GM12878 (cell line): ENCODE measurements at regions of chr15 and their contacts with region 1.

Region 1: GRCh38 chr15:92097474-92098178 is 244.1 kb downstream of the SLCO3A1 start:
- DNase-seq: peak; percentile 20
- ATAC-seq: peak; percentile 89
- H3K4me3 ChIP-seq: no peak overlapping the region
- H3K27ac ChIP-seq: no peak overlapping the region
- H3K4me1 ChIP-seq: peaks cover 27% of the 10 kb centered on the region
- H3K27me3 ChIP-seq: no peaks in the 10 kb centered on the region
- CTCF ChIP-seq: peak; percentile 82 to 90 (median 85)
- EP300 ChIP-seq: no peak
- POLR2A ChIP-seq: no peak
- RAD21 ChIP-seq: peak; percentile 86

Region 2: DNA sequence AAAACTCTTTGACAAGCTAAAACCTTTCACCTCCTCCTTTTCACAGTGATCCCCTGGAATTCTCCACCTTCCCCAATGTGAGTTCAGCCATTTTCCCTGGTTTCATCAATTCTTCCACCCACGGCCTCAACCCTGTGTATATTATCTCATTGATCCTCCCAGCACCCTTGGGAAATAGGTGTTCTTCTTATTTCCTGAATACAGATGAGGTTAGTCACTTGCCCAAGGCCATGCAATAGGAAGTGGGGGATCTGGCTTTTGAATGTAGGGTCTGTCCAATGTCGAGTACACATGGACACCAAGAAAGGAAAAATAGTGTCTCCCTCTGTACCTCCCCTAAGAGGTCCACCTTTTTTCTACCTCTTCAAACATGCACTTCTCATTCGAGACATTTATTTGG is 33.3 kb after region 1 on chr15:
- CTCF ChIA-PET with region 1: no interaction called
- POLR2A ChIA-PET with region 1: no interaction called
- RAD21 ChIA-PET with region 1: no interaction called
- SMC1A ChIA-PET with region 1: no interaction called
- in situ Hi-C with region 1: no loop called
- intact Hi-C with region 1: no loop called
- DNase-seq: no peak
- ATAC-seq: no peak
- H3K4me3 ChIP-seq: no peak overlapping the region
- H3K27ac ChIP-seq: no peak overlapping the region
- H3K4me1 ChIP-seq: no peaks in the 10 kb centered on the region
- H3K27me3 ChIP-seq: no peaks in the 10 kb centered on the region; a peak in 1 of 4 replicates
- CTCF ChIP-seq: no peak
- EP300 ChIP-seq: no peak
- POLR2A ChIP-seq: no peak
- RAD21 ChIP-seq: no peak

Region 3: GRCh38 chr15:92161039-92161670 is 63.5 kb after region 1 on chr15:
- CTCF ChIA-PET with region 1: no interaction called
- POLR2A ChIA-PET with region 1: no interaction called
- RAD21 ChIA-PET with region 1: no interaction called
- SMC1A ChIA-PET with region 1: interaction called, 6 read pairs
- in situ Hi-C with region 1: no loop called
- intact Hi-C with region 1: loop called (anchors 1 kb)
- DNase-seq: peak; percentile 80
- ATAC-seq: peak; percentile 91
- H3K4me3 ChIP-seq: no peak overlapping the region
- H3K27ac ChIP-seq: peak overlapping the region; percentile 54
- H3K4me1 ChIP-seq: peaks cover 19% of the 10 kb centered on the region
- H3K27me3 ChIP-seq: no peaks in the 10 kb centered on the region
- CTCF ChIP-seq: no peak
- EP300 ChIP-seq: no peak; a peak in 1 of 4 replicates
- POLR2A ChIP-seq: no peak
- RAD21 ChIP-seq: no peak

Region 4: DNA sequence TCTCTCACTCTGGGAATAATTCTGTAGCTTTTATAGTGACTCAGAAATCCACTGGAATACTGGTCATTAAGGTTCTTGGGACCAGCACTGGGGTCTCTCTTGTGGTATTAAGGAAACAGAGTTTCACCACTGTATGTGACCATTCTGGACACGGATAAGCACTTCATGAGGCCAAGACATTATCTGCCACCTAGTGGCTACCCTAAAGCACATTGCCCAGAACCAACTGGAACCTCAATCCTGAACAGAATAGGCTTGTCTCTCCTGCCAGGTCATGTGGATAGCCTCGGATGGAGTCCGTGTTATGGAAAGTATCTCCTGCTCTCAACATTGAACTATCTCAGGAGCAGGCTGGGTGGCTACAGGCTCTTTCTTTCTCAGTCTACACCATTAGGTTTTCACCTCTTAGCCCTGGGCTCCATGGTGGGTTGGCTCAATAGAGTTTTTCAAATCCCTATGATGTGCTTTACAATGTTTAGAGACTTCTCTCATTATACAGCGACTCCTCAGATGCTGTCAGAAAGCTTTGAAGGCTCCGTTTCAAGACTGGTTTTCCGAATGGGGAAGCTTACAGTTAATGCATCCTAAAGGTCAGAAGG is 128.5 kb after region 1 on chr15:
- CTCF ChIA-PET with region 1: interaction called, 9 read pairs
- POLR2A ChIA-PET with region 1: no interaction called
- RAD21 ChIA-PET with region 1: interaction called, 5 read pairs
- SMC1A ChIA-PET with region 1: interaction called, 5 read pairs
- in situ Hi-C with region 1: loop called (anchors 5 kb)
- intact Hi-C with region 1: loop called (anchors 1 kb)
- DNase-seq: no peak
- ATAC-seq: peak; percentile 82
- H3K4me3 ChIP-seq: no peak overlapping the region
- H3K27ac ChIP-seq: no peak overlapping the region
- H3K4me1 ChIP-seq: no peaks in the 10 kb centered on the region
- H3K27me3 ChIP-seq: no peaks in the 10 kb centered on the region
- CTCF ChIP-seq: peak; percentile 54 to 63 (median 63)
- EP300 ChIP-seq: no peak
- POLR2A ChIP-seq: no peak
- RAD21 ChIP-seq: peak; percentile 34; the same call in 1 of the 2 replicates

Region 5: GRCh38 chr15:92383519-92384326 is 286.1 kb after region 1 on chr15:
- CTCF ChIA-PET with region 1: interaction called, 22 read pairs
- POLR2A ChIA-PET with region 1: no interaction called
- RAD21 ChIA-PET with region 1: no interaction called
- SMC1A ChIA-PET with region 1: no interaction called
- in situ Hi-C with region 1: loop called (anchors 5 kb)
- intact Hi-C with region 1: loop called (anchors 1 kb)
- DNase-seq: no peak
- ATAC-seq: peak; percentile 79
- H3K4me3 ChIP-seq: no peak overlapping the region
- H3K27ac ChIP-seq: no peak overlapping the region
- H3K4me1 ChIP-seq: no peaks in the 10 kb centered on the region
- H3K27me3 ChIP-seq: no peaks in the 10 kb centered on the region
- CTCF ChIP-seq: peak; percentile 66 to 91 (median 85)
- EP300 ChIP-seq: no peak
- POLR2A ChIP-seq: no peak
- RAD21 ChIP-seq: peak; percentile 53

Region 6: DNA sequence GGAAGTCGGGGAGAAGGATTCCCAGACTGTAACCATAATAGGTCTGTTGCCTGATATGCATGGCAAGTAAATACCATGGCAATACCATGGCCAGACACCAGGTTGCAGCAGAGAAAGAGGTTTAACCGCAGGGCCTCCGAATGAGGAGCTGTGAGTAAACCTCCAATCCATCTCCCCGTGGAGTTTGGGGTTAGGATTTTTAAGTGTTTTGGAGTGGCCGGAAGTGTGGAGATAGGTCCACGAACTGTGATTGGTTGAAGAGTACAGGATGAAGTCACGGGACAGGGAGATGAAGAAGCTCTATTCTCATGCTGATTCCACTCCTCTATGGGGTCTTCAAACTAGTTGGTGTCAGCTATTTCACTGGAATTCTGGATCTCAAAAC is 424.0 kb after region 1 on chr15:
- CTCF ChIA-PET with region 1: interaction called, 4 read pairs
- POLR2A ChIA-PET with region 1: no interaction called
- RAD21 ChIA-PET with region 1: interaction called, 3 read pairs
- SMC1A ChIA-PET with region 1: interaction called, 3 read pairs
- in situ Hi-C with region 1: no loop called
- intact Hi-C with region 1: loop called (anchors 5 kb)
- DNase-seq: peak; percentile 37
- ATAC-seq: peak; percentile 97
- H3K4me3 ChIP-seq: no peak overlapping the region
- H3K27ac ChIP-seq: no peak overlapping the region
- H3K4me1 ChIP-seq: no peaks in the 10 kb centered on the region
- H3K27me3 ChIP-seq: no peaks in the 10 kb centered on the region
- CTCF ChIP-seq: peak; percentile 72 to 87 (median 75)
- EP300 ChIP-seq: no peak
- POLR2A ChIP-seq: no peak
- RAD21 ChIP-seq: peak; percentile 88